GM12878 (cell line): ENCODE measurements at regions of chr4 and their contacts with region 1.

Region 1: DNA sequence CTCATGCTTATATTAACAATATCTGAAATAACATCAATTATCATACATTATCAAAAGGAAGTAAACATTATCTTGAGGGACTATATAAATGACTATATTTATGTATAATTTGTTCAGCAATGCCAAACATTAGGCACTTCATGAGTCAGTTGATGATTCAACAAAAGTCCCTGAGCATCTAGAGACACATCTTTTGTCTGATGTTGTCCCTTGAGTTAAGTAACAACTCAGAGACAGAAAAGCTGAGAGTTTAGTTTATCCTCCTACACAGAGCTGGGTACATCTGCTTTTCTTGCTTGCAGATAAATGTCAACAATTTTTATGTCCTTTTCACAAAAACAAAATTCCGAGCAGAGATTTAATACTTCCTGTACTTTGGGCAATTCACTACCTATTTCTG is 311.1 kb downstream of the INPP4B start:
- DNase-seq: no peak
- ATAC-seq: peak; percentile 53
- H3K4me3 ChIP-seq: no peak overlapping the region
- H3K27ac ChIP-seq: no peak overlapping the region
- H3K4me1 ChIP-seq: no peaks in the 10 kb centered on the region
- H3K27me3 ChIP-seq: no peaks in the 10 kb centered on the region
- CTCF ChIP-seq: no peak
- EP300 ChIP-seq: no peak
- POLR2A ChIP-seq: no peak
- RAD21 ChIP-seq: no peak

Region 2: DNA sequence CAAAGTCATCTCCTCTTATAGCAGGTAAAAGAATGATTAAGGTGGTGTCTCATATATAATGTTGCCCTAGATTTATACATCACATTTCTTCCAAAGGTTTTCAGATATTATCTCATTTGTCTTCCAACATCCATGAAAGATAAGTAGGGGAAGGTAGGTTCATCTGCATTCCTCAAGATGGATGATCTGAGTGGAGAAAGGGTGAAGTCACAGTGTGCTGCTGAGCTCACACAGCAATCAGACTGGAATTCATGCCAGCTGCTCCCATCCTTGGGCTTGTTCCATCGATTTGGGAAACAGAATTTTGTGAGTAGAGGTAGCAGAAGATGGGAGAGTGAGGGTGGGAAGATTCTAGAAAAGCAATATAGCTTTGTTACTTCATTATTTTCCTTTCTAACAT is 171.3 kb before region 1 on chr4:
- CTCF ChIA-PET with region 1: no interaction called
- POLR2A ChIA-PET with region 1: no interaction called
- RAD21 ChIA-PET with region 1: no interaction called
- SMC1A ChIA-PET with region 1: no interaction called
- in situ Hi-C with region 1: no loop called
- intact Hi-C with region 1: no loop called
- DNase-seq: no peak
- ATAC-seq: no peak
- H3K4me3 ChIP-seq: no peak overlapping the region
- H3K27ac ChIP-seq: no peak overlapping the region
- H3K4me1 ChIP-seq: no peaks in the 10 kb centered on the region
- H3K27me3 ChIP-seq: no peaks in the 10 kb centered on the region
- CTCF ChIP-seq: no peak
- EP300 ChIP-seq: no peak
- POLR2A ChIP-seq: no peak
- RAD21 ChIP-seq: no peak

Region 3: GRCh38 chr4:142474335-142475087 is 60.5 kb before region 1 on chr4:
- CTCF ChIA-PET with region 1: no interaction called
- POLR2A ChIA-PET with region 1: interaction called, 3 read pairs
- RAD21 ChIA-PET with region 1: interaction called, 3 read pairs
- SMC1A ChIA-PET with region 1: interaction called, 10 read pairs
- in situ Hi-C with region 1: no loop called
- intact Hi-C with region 1: no loop called
- DNase-seq: no peak
- ATAC-seq: peak; percentile 64
- H3K4me3 ChIP-seq: no peak overlapping the region
- H3K27ac ChIP-seq: no peak overlapping the region
- H3K4me1 ChIP-seq: no peaks in the 10 kb centered on the region
- H3K27me3 ChIP-seq: no peaks in the 10 kb centered on the region
- CTCF ChIP-seq: no peak
- EP300 ChIP-seq: no peak
- POLR2A ChIP-seq: no peak
- RAD21 ChIP-seq: no peak

Region 4: GRCh38 chr4:142485452-142485851 is 49.6 kb before region 1 on chr4:
- CTCF ChIA-PET with region 1: no interaction called
- POLR2A ChIA-PET with region 1: no interaction called
- RAD21 ChIA-PET with region 1: interaction called, 3 read pairs
- SMC1A ChIA-PET with region 1: interaction called, 12 read pairs
- in situ Hi-C with region 1: no loop called
- intact Hi-C with region 1: no loop called
- DNase-seq: no peak
- ATAC-seq: no peak
- H3K4me3 ChIP-seq: no peak overlapping the region
- H3K27ac ChIP-seq: no peak overlapping the region
- H3K4me1 ChIP-seq: no peaks in the 10 kb centered on the region
- H3K27me3 ChIP-seq: no peaks in the 10 kb centered on the region
- CTCF ChIP-seq: no peak
- EP300 ChIP-seq: no peak
- POLR2A ChIP-seq: no peak
- RAD21 ChIP-seq: no peak

Region 5: GRCh38 chr4:142549726-142550463 is 14.9 kb after region 1 on chr4:
- CTCF ChIA-PET with region 1: interaction called, 19 read pairs
- POLR2A ChIA-PET with region 1: no interaction called
- RAD21 ChIA-PET with region 1: interaction called, 47 read pairs
- SMC1A ChIA-PET with region 1: interaction called, 115 read pairs
- in situ Hi-C with region 1: no loop called
- intact Hi-C with region 1: no loop called
- DNase-seq: no peak
- ATAC-seq: peak; percentile 35
- H3K4me3 ChIP-seq: no peak overlapping the region
- H3K27ac ChIP-seq: no peak overlapping the region
- H3K4me1 ChIP-seq: no peaks in the 10 kb centered on the region
- H3K27me3 ChIP-seq: no peaks in the 10 kb centered on the region
- CTCF ChIP-seq: no peak
- EP300 ChIP-seq: no peak
- POLR2A ChIP-seq: no peak
- RAD21 ChIP-seq: no peak

Region 6: DNA sequence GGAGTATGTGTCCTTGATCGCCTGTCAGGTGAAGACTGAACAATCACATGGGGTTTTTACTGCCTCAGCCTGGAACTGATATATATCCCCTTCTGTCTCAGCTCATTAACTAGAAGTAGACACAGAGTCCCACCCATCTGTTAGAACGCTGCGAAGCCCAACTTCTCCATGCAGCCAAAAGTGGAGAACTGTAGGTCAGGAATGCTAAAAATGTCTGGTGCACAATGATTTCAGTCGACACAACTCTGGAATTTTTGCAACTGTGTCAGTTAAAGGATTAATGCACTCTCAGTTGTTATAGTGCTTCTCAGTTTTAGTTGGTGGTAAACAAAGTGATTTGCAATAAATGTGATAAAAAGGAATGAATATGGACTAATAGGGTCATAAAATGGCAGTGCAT is 23.8 kb after region 1 on chr4:
- CTCF ChIA-PET with region 1: interaction called, 19 read pairs
- POLR2A ChIA-PET with region 1: interaction called, 4 read pairs
- RAD21 ChIA-PET with region 1: interaction called, 47 read pairs
- SMC1A ChIA-PET with region 1: interaction called, 115 read pairs
- in situ Hi-C with region 1: no loop called
- intact Hi-C with region 1: no loop called
- DNase-seq: no peak
- ATAC-seq: no peak
- H3K4me3 ChIP-seq: no peak overlapping the region
- H3K27ac ChIP-seq: no peak overlapping the region
- H3K4me1 ChIP-seq: no peaks in the 10 kb centered on the region
- H3K27me3 ChIP-seq: no peaks in the 10 kb centered on the region
- CTCF ChIP-seq: no peak
- EP300 ChIP-seq: no peak
- POLR2A ChIP-seq: no peak
- RAD21 ChIP-seq: no peak

Region 7: GRCh38 chr4:142637614-142638013 is 102.6 kb after region 1 on chr4:
- CTCF ChIA-PET with region 1: no interaction called
- POLR2A ChIA-PET with region 1: no interaction called
- RAD21 ChIA-PET with region 1: no interaction called
- SMC1A ChIA-PET with region 1: no interaction called
- in situ Hi-C with region 1: no loop called
- intact Hi-C with region 1: no loop called
- DNase-seq: no peak
- ATAC-seq: no peak
- H3K4me3 ChIP-seq: no peak overlapping the region
- H3K27ac ChIP-seq: no peak overlapping the region
- H3K4me1 ChIP-seq: no peaks in the 10 kb centered on the region
- H3K27me3 ChIP-seq: no peaks in the 10 kb centered on the region
- CTCF ChIP-seq: no peak
- EP300 ChIP-seq: no peak
- POLR2A ChIP-seq: no peak
- RAD21 ChIP-seq: no peak